Posterior vena cava (tissue), 2 donors: ENCODE measurements at regions of chr16 and their contacts with region 1.

Region 1: DNA sequence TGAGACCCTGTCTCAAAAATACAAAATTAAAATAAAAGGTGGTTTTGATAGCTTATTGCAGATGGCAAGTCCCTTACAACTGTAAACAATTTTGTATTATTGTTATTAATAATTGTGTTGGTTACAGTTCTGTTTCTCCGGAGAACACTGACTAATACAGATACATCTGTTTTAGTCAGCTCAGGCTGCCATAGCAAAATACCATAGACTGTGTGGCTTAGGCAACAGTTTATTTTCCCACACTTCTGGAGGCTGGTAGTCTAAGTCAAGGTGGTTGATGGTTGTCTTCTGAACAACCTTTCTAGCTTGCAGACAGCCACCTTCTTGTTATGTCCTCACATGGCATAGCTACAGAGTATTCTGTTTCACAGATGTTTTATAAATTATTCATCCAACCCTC is 14.2 kb upstream of the IL21R start:
- DNase-seq: no peak

Region 2: DNA sequence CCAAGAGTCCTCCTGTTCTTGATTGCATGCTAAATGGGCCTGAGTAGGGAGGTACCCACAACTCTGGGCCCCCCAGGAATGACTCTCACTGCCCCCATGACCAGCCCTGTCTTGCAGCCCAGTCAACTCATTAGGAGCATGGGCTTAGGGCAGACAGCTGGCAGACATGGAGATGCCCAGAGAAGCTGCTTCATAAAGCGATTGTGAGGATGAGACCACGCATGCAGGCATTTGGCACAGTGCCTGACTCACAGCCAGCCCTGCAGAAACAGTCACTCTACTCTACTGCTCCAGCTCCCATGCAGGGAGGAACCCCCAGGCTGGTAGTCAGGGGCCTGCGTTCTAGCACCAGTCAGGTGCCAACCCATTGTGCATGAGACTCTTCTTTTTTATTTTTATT is 329.4 kb before region 1 on chr16:
- intact Hi-C with region 1: no loop called
- DNase-seq: no peak

Region 3: DNA sequence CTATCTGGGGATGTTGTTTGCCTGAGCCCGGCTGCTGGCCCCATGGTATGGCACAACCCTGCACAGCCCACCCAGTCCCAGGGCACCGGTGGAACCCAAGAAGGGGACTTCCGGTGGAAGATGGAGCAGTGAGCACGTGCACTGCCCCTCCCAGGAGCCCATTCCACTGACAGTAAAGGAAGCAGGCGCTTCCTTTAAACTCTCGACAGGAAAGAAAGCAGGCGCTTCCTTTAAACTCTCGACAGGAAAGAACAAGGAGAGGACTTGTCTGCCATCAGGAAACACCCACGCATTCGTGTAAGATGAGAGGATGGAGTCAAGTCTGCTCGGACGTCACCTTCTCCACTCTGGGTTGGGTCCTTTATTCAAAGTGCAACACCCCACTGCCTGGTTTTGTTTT is 68.0 kb after region 1 on chr16:
- intact Hi-C with region 1: loop called in 1 of 2 experiments (anchors 2 kb)
- DNase-seq: peak; percentile 78

Region 4: GRCh38 chr16:27470567-27471431 is 83.1 kb after region 1 on chr16:
- intact Hi-C with region 1: no loop called
- DNase-seq: peak; percentile 84